Posterior cingulate gyrus (tissue), 11 donors: ENCODE measurements at regions of chr5 and their contacts with region 1.

Region 1: GRCh38 chr5:159657771-159658170 is 258.5 kb upstream of the ADRA1B start:
- DNase-seq: peak in 1 of 10 donors; percentile 11

Region 2: DNA sequence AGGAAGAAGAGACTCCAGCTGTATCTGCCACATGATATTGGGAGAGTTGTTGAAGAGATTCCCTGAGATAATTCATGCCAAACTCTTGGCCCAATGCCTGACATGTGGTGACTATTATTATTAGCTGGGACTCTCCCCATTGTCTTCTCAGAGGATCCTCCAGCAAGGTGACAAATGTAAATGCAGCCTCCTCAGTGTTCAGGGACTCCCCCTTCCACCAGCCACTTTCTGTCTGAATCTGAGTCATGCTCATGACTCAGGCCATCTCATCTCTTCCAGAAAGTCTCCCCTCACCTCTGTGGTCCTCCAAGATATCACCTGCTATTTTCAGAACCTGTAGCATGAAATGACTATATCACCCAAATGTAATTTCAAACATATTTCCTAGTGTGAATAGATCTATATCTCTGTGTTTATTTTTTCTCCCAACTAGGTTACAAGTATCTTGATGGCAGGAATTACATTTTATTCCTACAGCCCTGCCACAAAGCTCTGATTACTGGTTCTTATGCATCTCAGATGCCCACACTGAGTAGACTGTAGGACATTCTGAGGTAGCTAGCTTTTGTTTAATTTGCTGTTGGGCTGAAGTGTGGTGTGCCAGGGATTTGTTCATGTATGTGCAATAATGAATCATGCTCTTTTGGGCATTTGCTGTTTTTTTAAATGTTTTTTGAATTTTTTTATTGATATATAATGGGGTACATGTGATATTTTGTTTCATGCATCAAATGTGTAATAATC is 200.9 kb before region 1 on chr5:
- intact Hi-C with region 1: loop called (anchors 10 kb)
- DNase-seq: no peak

Region 3: GRCh38 chr5:159995907-159996306 is 338.1 kb after region 1 on chr5:
- intact Hi-C with region 1: no loop called
- DNase-seq: no peak

Region 4: DNA sequence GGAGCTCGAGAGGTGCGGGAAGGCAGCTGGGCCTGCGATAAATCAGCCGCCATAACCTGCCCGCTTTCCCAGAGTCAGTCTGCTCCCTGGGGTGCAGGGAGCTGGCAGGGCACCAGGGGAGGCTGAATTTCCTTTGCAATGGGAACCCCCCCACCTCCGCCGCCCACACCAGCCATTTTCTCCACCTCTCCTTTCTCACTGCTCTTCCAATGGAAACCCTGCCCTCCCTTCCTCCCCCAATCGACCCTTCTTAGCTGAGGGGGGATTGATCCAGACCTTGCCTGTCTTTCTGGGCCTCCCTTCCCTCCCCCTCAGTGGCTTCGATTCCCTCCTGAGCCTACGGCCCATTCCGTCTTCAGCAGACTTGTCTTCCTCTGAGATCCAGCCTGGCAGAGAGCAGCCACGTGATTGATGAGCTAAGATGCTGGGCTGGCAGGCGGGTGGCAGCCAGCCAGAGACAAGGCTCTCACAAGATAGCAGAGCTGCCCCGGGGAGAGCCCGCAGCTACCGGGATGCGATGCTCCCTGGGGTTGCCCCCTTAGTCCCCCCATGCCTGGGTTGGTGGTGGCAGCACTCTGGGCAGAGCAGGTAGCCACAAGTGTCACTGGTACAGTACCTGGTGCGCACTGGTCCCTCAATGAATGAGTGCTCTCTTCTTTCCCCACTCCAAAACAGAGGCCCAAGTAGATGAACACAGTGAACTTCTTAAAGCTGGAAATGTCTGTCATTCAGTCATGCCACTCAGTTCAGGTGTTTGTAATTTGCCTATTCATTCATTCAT is 517.9 kb after region 1 on chr5:
- intact Hi-C with region 1: no loop called
- DNase-seq: peak; percentile 67 to 98 (median 84)